Astrocyte of the cerebellum (primary cell): ENCODE measurements at regions of chr22 and their contacts with region 1.

Region 1: DNA sequence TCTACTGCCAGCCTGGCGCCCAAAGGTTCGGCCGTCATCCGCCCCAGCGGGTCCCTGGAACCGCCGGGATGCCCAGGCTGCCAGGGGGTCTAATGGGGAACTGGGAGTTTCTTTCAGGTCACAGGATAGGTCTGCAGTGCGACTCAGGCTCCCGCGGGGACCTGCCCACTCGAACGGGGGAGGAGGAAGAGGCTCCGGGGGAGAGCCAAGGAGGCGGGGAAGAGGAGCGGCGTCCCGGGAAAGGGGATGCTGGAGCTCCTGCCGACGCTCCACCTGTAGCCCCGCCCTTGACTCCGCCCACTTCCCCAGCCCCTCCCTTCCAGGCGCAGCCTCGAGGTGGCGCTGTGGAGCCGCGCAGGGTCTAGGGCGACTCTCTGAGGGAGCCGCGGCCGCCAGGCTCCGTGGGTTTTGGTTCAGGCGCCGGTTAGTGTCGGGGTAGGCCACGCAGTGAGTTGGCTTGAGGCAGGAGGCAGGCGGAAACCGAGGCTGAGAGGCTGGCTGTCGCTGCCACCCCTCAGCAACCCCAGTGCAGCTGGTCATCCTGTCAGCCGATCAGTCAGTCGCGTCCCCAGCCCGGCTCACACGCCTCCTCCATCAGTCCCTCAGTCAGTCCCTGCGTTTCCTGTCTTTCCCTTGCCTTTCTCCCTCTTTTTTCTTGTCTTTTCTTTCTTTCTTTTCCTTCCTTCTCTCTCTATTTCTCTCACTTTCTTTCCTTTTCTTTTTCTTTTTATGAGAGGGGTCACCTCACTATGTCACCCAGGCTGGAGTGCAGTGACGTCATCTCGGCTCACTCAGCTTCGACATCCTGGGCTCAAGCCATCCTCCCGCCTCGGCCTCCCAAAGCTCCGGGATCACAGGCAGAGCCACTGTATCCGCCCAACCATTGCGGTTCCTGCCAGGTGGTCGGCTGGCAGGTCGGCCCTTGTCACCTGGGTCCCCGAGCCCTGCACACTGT is 26.4 kb downstream of the YWHAH start:
- DNase-seq: peak; percentile 23
- H3K4me3 ChIP-seq: peak overlapping the region; percentile 46
- CTCF ChIP-seq: peak; percentile 88

Region 2: GRCh38 chr22:31715147-31715778 is 255.5 kb before region 1 on chr22:
- in situ Hi-C with region 1: loop called (anchors 25 kb)
- DNase-seq: no peak
- H3K4me3 ChIP-seq: no peak overlapping the region
- CTCF ChIP-seq: no peak

Region 3: DNA sequence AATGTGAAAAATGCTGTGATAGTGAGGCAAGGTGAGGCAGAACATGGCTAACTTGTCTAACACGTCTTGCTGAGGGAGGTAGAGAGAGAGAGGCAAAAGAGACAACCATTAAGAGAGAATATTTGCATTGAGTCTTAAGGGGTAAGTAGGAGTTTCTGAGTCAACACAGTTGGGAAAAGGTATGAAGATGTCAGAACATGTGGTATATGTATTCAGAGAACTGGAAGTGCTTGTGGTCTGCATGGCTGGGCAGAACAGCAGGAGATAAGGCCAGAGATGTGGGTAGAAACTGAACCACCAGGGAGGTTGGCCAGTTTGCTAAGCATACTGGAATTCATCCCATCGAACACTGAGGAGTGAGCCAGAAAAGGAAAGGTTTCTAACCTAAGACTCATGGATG is 47.3 kb after region 1 on chr22:
- in situ Hi-C with region 1: no loop called
- DNase-seq: peak; percentile 81
- H3K4me3 ChIP-seq: no peak overlapping the region
- CTCF ChIP-seq: no peak